Left lung (tissue), 14 donors: ENCODE measurements at regions of chr13 and their contacts with region 1.

Region 1: DNA sequence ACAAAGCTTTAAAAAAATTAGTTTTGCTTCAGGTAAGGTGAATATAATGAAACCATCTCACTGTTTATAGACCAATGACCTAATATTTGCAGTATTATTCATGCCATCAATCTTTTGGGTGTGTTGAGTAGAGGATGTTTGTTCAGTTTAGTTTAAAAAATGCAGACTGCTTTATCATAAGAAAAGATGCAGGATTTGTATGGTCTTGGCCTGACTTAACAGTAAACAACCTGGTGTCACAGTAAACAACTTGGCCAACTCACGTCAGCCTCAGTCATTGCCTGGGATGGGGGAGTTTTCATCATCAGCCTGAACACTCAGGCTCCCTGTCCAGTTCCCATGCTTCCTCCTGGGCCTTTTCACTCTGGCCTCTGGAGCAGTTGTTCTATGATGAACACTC is 55.1 kb downstream of the LMO7 start:
- DNase-seq: no peak
- ATAC-seq: peak; percentile 9
- H3K4me3 ChIP-seq: no peak overlapping the region
- H3K27ac ChIP-seq: no peak overlapping the region
- H3K4me1 ChIP-seq: peaks cover 3% of the 10 kb centered on the region in 2 donors
- H3K27me3 ChIP-seq: no peaks in the 10 kb centered on the region
- CTCF ChIP-seq: no peak

Region 2: GRCh38 chr13:75437582-75438318 is 253.4 kb before region 1 on chr13:
- intact Hi-C with region 1: no loop called
- DNase-seq: peak in 1 of 4 donors; percentile 50
- ATAC-seq: peak; percentile 36
- H3K4me3 ChIP-seq: no peak overlapping the region
- H3K27ac ChIP-seq: no peak overlapping the region
- H3K4me1 ChIP-seq: no peaks in the 10 kb centered on the region
- H3K27me3 ChIP-seq: no peaks in the 10 kb centered on the region
- CTCF ChIP-seq: no peak

Region 3: DNA sequence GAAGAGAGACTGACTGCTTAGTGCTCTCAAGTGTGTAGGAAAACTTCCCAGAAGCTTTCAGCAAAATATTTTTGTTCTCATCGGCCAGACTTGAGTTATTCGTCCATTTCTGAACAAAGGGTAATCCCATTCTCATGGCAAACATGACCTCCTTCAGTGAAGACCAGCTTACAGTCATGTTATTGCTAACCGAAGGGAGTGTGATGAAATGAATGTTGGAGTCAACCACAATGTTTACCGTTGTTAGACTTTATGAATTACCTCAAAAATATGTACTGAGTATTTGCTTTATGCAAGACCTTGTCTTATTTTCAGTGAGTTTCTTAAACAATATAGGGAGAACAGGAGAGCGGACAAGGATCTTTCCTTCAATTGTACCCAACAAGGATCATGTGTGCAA is 173.5 kb after region 1 on chr13:
- intact Hi-C with region 1: loop called in 1 of 2 experiments (anchors 10 kb)
- DNase-seq: no peak
- ATAC-seq: peak; percentile 28
- H3K4me3 ChIP-seq: no peak overlapping the region
- H3K27ac ChIP-seq: no peak overlapping the region
- H3K4me1 ChIP-seq: no peaks in the 10 kb centered on the region
- H3K27me3 ChIP-seq: no peaks in the 10 kb centered on the region
- CTCF ChIP-seq: no peak

Region 4: GRCh38 chr13:76473552-76474134 is 782.5 kb after region 1 on chr13:
- intact Hi-C with region 1: loop called in 1 of 2 experiments (anchors 10 kb)
- DNase-seq: peak in 3 of 4 donors; percentile 62 to 82 (median 64)
- ATAC-seq: peak; percentile 99
- H3K4me3 ChIP-seq: no peak overlapping the region
- H3K27ac ChIP-seq: no peak overlapping the region
- H3K4me1 ChIP-seq: peaks cover 0 to 6% of the 10 kb centered on the region in 2 donors
- H3K27me3 ChIP-seq: no peaks in the 10 kb centered on the region
- CTCF ChIP-seq: peak; percentile 72 to 88

Region 5: DNA sequence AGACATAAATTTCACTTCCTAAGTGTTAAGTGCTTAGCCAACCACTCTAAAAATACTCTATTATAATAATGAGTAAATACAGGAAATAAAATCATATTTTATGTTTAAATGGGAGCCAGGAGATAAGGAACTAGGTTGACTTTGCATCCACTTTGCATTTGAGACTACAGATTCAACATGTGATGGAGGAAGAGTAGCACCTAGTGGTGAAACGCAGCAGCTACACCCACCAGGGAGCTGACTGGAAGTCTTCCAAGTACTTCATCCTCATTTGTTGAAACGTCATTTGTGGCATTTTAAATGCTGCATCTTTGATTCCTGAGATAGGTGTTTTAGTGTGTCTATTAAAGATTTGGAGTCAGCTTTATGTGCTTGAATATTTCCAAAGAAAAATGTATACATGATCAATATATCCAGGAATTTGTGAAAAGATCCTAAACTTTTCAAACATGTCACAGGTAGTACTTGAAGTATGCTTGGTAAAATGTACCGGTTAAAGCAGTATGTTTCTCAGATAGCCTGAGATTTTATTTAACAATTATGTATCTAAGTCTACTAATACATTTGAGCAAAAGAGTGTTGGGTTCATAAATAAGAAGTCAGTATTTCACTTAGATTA is 1212.5 kb after region 1 on chr13:
- intact Hi-C with region 1: loop called in 1 of 2 experiments (anchors 10 kb)
- DNase-seq: peak in 2 of 4 donors; percentile 62 to 79
- ATAC-seq: peak; percentile 99
- H3K4me3 ChIP-seq: no peak overlapping the region
- H3K27ac ChIP-seq: no peak overlapping the region
- H3K4me1 ChIP-seq: peaks cover 2 to 7% of the 10 kb centered on the region in 2 donors
- H3K27me3 ChIP-seq: no peaks in the 10 kb centered on the region
- CTCF ChIP-seq: peak; percentile 98 to 99